ENCODE measurements at regions of chr12 and their contacts with region 1.

Region 1: DNA sequence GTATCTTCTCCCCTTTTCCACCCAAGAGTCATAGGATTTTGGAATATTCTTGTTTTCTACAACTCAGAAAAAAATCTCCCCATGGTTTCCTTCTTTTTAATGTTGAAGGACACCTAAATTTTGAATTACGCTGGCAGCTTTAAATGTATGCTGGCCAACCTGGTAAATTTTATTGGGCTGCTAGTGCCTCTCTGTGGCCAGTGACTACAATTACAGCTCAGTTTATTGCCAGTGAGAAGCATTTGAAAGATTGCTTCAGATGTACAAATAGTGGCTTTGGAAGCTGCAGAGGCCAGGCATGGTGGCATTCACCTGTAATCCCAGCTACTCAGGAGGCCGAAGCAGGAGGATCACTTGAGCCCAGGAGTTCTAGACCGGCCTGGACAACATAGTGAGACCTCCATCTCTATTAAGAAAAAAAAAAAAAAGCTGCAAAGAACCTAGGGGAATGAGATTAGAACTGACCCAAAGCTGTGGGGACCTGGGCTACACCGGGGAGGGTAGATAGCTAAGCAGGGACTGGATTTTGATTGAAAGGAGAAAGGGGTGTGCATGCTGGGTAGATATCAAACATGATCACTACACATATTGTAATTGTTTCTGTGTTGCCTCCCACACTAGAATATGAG is 7.6 kb upstream of the RAB21 start:
- DNase-seq: peak; percentile 39
- ATAC-seq: peak; percentile 91
- H3K4me3 Mint-ChIP-seq: no peak overlapping the region
- H3K27ac Mint-ChIP-seq: no peak overlapping the region
- H3K4me1 Mint-ChIP-seq: no peaks in the 10 kb centered on the region
- H3K27me3 Mint-ChIP-seq: peaks cover 9% of the 10 kb centered on the region
- CTCF ChIP-seq: peak; percentile 83

Region 2: GRCh38 chr12:71220260-71220659 is 526.8 kb before region 1 on chr12:
- CTCF ChIA-PET with region 1: no interaction called
- POLR2A ChIA-PET with region 1: no interaction called
- intact Hi-C with region 1: no loop called
- DNase-seq: no peak
- ATAC-seq: no peak
- H3K4me3 Mint-ChIP-seq: no peak overlapping the region
- H3K27ac Mint-ChIP-seq: no peak overlapping the region
- H3K4me1 Mint-ChIP-seq: no peaks in the 10 kb centered on the region
- H3K27me3 Mint-ChIP-seq: peaks cover 3% of the 10 kb centered on the region
- CTCF ChIP-seq: no peak

Region 3: GRCh38 chr12:71626098-71626497 is 121.0 kb before region 1 on chr12:
- CTCF ChIA-PET with region 1: interaction called, 11 read pairs
- POLR2A ChIA-PET with region 1: interaction called, 3 read pairs
- intact Hi-C with region 1: no loop called
- DNase-seq: no peak
- ATAC-seq: no peak
- H3K4me3 Mint-ChIP-seq: peak overlapping the region; percentile 4
- H3K27ac Mint-ChIP-seq: peak overlapping the region; percentile 64
- H3K4me1 Mint-ChIP-seq: peaks cover 17% of the 10 kb centered on the region
- H3K27me3 Mint-ChIP-seq: no peaks in the 10 kb centered on the region
- CTCF ChIP-seq: no peak

Region 4: GRCh38 chr12:71642264-71642663 is 104.8 kb before region 1 on chr12:
- CTCF ChIA-PET with region 1: interaction called, 37 read pairs
- POLR2A ChIA-PET with region 1: no interaction called
- intact Hi-C with region 1: loop called (anchors 5 kb)
- DNase-seq: no peak
- ATAC-seq: peak; percentile 46
- H3K4me3 Mint-ChIP-seq: no peak overlapping the region
- H3K27ac Mint-ChIP-seq: peak overlapping the region; percentile 19
- H3K4me1 Mint-ChIP-seq: peaks cover 28% of the 10 kb centered on the region
- H3K27me3 Mint-ChIP-seq: no peaks in the 10 kb centered on the region
- CTCF ChIP-seq: no peak

Region 5: DNA sequence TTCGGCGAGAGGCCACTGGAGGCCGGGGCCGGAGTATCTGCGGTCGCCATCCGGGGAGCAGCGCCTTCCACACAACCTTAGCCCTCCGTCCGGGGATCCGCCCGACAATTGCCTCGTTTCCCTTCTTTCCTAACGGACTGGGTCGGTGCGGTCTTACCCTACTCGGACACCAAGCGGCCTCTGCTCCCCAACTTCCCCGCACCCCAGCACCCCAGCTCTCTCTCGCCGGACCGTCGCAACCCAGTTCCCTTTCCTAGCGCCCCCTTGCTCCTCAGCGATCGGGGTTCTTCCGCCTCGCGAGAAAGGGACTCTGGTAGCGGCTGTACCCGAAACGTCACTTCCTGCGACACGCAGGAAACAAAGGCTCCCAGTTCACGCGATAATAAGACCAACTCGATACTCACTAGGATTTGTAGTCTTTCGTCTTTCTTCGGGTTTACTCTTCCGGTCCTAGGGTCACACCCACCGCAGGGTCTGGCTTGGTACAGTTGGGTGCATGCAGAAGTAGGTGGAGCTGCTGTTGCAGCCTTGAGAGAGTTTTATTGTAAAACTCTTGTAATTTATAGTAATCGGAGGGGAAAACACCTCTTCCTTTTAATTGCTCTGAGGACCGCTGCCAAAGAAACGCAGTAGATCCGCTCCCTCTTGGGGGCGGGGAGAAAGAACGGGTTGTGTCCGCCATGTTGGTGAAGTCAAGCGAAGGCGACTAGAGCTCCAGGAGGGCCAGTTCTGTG is 83.4 kb before region 1 on chr12 and contains the start of gene ZFC3H1:
- CTCF ChIA-PET with region 1: interaction called, 15 read pairs
- POLR2A ChIA-PET with region 1: interaction called, 29 read pairs
- intact Hi-C with region 1: no loop called
- DNase-seq: peak; percentile 95
- ATAC-seq: peak; percentile 85
- H3K4me3 Mint-ChIP-seq: peak within 1 kb of the TSS; percentile 100
- H3K27ac Mint-ChIP-seq: peak within 1 kb of the TSS; percentile 100
- H3K4me1 Mint-ChIP-seq: peaks cover 35% of the 10 kb centered on the region
- H3K27me3 Mint-ChIP-seq: no peaks in the 10 kb centered on the region
- CTCF ChIP-seq: no peak
- total RNA-seq, gene ZFC3H1: 47.1 to 58.4 TPM

Region 6: DNA sequence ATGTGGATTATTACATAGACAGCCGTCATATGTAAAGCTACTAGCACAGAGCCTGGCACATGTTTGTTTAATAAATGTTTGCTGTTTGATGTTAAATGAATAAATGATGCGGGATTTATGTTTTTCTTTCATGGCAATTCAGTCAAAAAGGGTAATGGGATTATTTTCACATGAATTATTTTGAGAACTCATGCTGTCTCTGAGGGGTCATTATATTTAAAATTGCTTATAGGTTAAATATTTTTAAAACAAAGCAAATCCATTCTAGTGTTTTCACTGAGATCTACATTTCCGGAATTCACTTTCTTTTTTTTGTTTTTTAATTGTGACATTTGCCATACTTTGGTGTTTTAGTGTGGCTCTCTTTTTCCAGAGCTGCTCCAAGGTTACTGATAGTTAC is 12.8 kb after region 1 on chr12:
- CTCF ChIA-PET with region 1: interaction called, 14 read pairs
- POLR2A ChIA-PET with region 1: interaction called, 3 read pairs
- intact Hi-C with region 1: no loop called
- DNase-seq: no peak
- ATAC-seq: no peak
- H3K4me3 Mint-ChIP-seq: no peak overlapping the region
- H3K27ac Mint-ChIP-seq: no peak overlapping the region
- H3K4me1 Mint-ChIP-seq: peaks cover 56% of the 10 kb centered on the region
- H3K27me3 Mint-ChIP-seq: no peaks in the 10 kb centered on the region
- CTCF ChIP-seq: no peak

Region 7: DNA sequence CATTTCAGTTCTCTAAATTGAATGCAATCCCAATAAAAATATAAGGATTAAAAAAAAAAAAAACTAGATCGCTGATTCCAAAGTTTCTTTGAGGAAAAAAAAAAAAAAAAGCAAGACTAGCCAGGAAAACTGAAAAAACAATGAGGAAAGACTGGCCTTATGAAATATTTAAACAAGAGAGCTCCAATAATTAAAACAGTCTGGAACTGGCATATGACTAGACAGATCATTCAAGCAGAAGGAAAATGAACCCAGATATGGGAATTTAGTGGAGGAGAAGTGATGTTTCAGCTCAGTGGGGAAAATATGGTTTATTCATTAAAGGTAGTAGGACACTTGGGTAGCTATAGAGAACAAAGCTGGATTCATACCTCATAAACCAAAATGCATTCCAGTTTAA is 50.4 kb after region 1 on chr12:
- CTCF ChIA-PET with region 1: no interaction called
- POLR2A ChIA-PET with region 1: no interaction called
- intact Hi-C with region 1: no loop called
- DNase-seq: no peak
- ATAC-seq: no peak
- H3K4me3 Mint-ChIP-seq: no peak overlapping the region
- H3K27ac Mint-ChIP-seq: no peak overlapping the region
- H3K4me1 Mint-ChIP-seq: no peaks in the 10 kb centered on the region
- H3K27me3 Mint-ChIP-seq: no peaks in the 10 kb centered on the region
- CTCF ChIP-seq: no peak

Region 8: GRCh38 chr12:71958993-71959578 is 212.0 kb after region 1 on chr12:
- CTCF ChIA-PET with region 1: no interaction called
- POLR2A ChIA-PET with region 1: no interaction called
- intact Hi-C with region 1: no loop called
- DNase-seq: no peak
- ATAC-seq: no peak
- H3K4me3 Mint-ChIP-seq: no peak overlapping the region
- H3K27ac Mint-ChIP-seq: no peak overlapping the region
- H3K4me1 Mint-ChIP-seq: peaks cover 4% of the 10 kb centered on the region
- H3K27me3 Mint-ChIP-seq: peaks cover 7% of the 10 kb centered on the region
- CTCF ChIP-seq: no peak

Region 9: GRCh38 chr12:72173974-72174373 is 426.9 kb after region 1 on chr12:
- CTCF ChIA-PET with region 1: no interaction called
- POLR2A ChIA-PET with region 1: no interaction called
- intact Hi-C with region 1: no loop called
- DNase-seq: no peak
- ATAC-seq: no peak
- H3K4me3 Mint-ChIP-seq: no peak overlapping the region
- H3K27ac Mint-ChIP-seq: no peak overlapping the region
- H3K4me1 Mint-ChIP-seq: no peaks in the 10 kb centered on the region
- H3K27me3 Mint-ChIP-seq: no peaks in the 10 kb centered on the region
- CTCF ChIP-seq: no peak